Activated CD4-positive, alpha-beta T cell treated with anti-CD3 and anti-CD28 coated beads for 36 hours (primary cell): ENCODE measurements at regions of chr5 and their contacts with region 1.

Region 1: DNA sequence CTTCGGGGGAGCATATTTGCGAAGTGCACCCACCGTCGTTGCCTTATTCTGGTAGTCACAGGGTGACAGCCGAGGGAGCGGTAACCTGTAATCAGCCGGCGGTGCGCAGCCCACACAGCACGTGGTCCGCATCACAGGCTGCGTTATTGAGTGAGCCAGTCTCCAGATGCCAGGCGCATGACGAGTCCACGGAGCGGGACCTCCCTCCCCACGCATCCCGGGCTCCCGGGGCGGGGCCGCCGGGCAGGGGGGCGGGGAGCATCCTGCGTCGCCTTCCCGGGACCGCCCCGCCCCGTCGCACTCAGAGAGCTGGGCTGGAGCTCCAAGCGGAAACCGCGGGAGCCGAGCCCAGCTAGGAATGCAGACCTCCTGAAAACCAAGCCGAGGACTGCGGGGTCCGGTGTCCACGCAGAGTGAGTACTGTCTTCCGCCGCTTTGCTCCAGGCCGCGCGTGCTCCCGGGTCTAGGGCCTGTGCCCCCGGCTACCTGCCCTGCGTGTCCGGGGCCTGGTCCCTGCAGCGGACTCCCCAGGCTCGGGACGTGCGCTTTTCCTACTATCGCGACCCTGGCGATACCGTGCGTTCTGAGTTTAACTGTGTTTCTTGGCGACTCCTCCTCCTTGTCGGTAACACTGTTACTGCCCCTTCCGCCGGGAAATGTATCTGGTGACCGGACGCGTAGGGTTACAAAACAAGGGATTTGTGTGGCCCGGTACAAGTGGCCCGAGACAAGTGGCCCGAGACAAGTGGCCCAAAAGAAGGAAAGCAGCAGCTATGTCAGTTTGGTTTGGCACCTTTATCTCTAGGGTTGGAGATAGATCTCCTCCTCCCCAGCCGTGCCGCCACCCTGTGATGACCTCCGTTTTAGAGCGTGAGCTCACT is 40.6 kb downstream of the CAST start:
- DNase-seq: peak; percentile 92
- ATAC-seq: peak; percentile 78
- H3K4me3 Mint-ChIP-seq: peak overlapping the region; percentile 91
- H3K27ac Mint-ChIP-seq: peak overlapping the region; percentile 81
- H3K4me1 Mint-ChIP-seq: peaks cover 51% of the 10 kb centered on the region
- H3K27me3 Mint-ChIP-seq: no peaks in the 10 kb centered on the region

Region 2: GRCh38 chr5:96344678-96345577 is 357.8 kb before region 1 on chr5:
- CTCF ChIA-PET with region 1: interaction called, 3 read pairs
- POLR2A ChIA-PET with region 1: no interaction called
- intact Hi-C with region 1: loop called in 1 of 2 experiments (anchors 10 kb)
- DNase-seq: peak; percentile 12
- ATAC-seq: peak; percentile 89
- H3K4me3 Mint-ChIP-seq: peak overlapping the region; percentile 15
- H3K27ac Mint-ChIP-seq: no peak overlapping the region
- H3K4me1 Mint-ChIP-seq: peaks cover 28% of the 10 kb centered on the region
- H3K27me3 Mint-ChIP-seq: peaks cover 10% of the 10 kb centered on the region

Region 3: DNA sequence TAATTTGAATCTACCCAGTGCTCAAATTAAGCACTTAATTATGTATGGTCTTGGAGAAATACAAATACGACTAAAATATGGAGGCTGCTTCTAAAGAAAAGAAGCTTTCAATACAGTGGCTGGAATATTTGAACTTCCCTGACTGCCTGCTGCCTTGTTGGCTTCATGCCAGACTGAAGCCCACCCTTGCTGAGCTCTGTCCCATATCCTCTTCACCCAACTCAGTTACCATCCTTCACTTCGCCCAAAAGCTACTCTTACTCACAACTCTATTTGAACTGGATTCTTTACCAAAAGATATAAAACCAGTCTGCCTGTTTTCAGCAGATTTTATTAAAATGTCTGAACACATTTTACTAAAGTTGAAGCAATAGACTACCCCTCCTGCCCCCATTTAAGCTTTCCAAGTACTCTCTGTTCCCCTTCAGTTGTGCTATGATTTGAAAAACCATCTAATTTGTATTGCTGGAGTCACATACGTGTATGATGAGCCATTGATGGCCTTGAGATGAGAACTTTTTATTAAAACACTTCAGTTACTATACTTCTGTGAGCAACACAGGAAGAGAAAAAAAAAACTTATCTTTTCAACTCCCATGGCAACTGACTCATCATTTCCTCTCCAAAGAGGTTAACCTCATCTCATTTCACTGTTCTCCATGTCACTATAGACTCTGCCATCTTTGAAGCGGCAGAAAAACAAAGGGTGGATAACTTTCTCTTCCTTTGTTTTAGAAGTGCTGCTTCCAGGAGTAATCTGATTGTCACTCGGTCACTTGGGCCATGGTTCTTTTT is 165.6 kb before region 1 on chr5:
- CTCF ChIA-PET with region 1: no interaction called
- POLR2A ChIA-PET with region 1: no interaction called
- intact Hi-C with region 1: loop called in 1 of 2 experiments (anchors 2 kb)
- DNase-seq: no peak
- ATAC-seq: peak; percentile 86
- H3K4me3 Mint-ChIP-seq: peak overlapping the region; percentile 1
- H3K27ac Mint-ChIP-seq: peak overlapping the region; percentile 82
- H3K4me1 Mint-ChIP-seq: peaks cover 32% of the 10 kb centered on the region
- H3K27me3 Mint-ChIP-seq: no peaks in the 10 kb centered on the region

Region 4: DNA sequence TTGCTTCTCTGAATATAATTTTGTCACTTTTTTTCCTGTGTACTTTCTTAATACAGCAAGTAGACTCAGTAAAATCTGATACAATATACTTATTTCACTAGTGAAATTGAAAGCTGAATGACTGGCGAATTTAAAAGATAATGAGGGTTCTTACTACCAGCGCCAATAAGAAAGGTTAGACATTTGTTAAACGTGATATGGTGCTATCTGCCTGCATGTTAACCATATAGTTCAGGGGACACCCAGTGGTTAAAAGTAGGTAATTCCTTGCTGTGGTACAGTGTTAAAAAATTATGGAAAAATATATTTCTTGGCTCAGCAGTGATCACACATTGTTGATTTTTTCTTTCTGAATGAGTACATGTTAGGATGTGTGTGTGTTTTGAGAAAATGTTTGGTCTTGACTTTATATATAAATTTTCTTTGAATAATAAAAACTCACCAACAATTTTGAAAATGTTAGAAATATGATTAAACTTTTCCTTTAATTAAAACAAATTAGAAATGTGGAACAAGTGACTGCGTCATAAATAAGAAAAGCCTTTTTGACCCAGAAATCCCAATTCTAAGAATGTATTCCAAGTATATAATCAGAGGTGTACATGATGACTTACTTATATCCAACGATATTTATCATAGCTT is 14.8 kb before region 1 on chr5:
- CTCF ChIA-PET with region 1: interaction called, 19 read pairs
- POLR2A ChIA-PET with region 1: interaction called, 4 read pairs
- intact Hi-C with region 1: no loop called
- DNase-seq: no peak
- ATAC-seq: peak; percentile 93
- H3K4me3 Mint-ChIP-seq: no peak overlapping the region
- H3K27ac Mint-ChIP-seq: no peak overlapping the region
- H3K4me1 Mint-ChIP-seq: peaks cover 23% of the 10 kb centered on the region
- H3K27me3 Mint-ChIP-seq: no peaks in the 10 kb centered on the region

Region 5: DNA sequence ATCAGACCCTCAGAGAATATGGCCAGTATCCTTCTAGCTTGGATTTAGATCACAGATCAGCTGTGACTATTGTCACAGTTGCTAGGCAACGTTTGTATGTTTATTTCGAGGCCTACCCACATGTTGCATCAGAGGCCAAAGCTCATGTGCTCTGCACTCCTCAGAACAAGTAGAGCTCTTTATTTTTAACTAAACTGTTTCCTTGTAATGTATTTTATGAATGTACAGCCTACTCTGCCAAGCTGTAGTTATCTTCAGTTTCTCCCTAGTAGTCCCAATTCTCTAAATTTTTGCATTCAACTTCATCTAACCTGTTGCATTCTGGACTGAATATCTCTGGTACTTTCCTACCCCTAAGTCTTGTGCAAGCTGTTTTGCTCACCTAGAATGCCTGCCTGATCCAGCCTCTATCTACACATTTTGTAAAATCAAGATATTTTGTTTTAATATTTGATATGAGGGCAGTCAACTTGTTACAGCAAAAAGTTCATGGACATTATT is 12.3 kb after region 1 on chr5:
- CTCF ChIA-PET with region 1: interaction called, 4 read pairs
- POLR2A ChIA-PET with region 1: interaction called, 7 read pairs
- intact Hi-C with region 1: loop called in 1 of 2 experiments (anchors 1 kb)
- DNase-seq: peak; percentile 53
- ATAC-seq: peak; percentile 71
- H3K4me3 Mint-ChIP-seq: no peak overlapping the region
- H3K27ac Mint-ChIP-seq: peak overlapping the region; percentile 33
- H3K4me1 Mint-ChIP-seq: peaks cover 38% of the 10 kb centered on the region
- H3K27me3 Mint-ChIP-seq: no peaks in the 10 kb centered on the region

Region 6: DNA sequence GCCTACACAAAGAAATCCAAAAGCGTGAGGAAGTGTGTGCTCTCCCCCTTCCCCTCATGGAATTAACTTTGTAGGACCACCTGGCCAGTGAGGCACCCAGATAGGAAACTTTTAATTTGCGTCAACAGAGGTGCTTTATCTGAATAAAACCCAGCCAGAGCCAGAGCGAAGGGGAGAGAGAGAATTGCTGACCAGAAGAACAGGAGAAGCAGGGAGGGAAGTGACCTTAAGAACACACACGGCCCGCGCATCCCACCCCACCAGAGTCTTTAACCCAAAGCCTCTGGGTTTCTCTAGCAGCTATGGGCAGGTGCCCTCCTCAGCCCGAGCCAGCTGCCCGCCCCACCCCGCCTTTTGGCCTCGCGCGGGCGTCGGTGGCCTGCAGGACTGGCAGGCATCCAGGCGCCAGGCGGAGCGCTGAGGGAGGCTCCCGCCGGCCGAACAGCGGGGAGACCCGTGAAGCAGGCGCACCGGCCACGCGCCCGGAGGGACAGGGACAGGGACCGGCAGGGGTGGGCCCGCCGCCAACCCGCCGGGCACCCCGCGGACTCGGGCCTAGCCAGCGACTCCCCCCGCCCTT is 104.4 kb after region 1 on chr5:
- CTCF ChIA-PET with region 1: no interaction called
- POLR2A ChIA-PET with region 1: interaction called, 4 read pairs
- intact Hi-C with region 1: loop called in 1 of 2 experiments (anchors 1 kb)
- DNase-seq: peak; percentile 65
- ATAC-seq: peak; percentile 5
- H3K4me3 Mint-ChIP-seq: peak overlapping the region; percentile 89
- H3K27ac Mint-ChIP-seq: peak overlapping the region; percentile 94
- H3K4me1 Mint-ChIP-seq: peaks cover 55% of the 10 kb centered on the region
- H3K27me3 Mint-ChIP-seq: no peaks in the 10 kb centered on the region

Region 7: DNA sequence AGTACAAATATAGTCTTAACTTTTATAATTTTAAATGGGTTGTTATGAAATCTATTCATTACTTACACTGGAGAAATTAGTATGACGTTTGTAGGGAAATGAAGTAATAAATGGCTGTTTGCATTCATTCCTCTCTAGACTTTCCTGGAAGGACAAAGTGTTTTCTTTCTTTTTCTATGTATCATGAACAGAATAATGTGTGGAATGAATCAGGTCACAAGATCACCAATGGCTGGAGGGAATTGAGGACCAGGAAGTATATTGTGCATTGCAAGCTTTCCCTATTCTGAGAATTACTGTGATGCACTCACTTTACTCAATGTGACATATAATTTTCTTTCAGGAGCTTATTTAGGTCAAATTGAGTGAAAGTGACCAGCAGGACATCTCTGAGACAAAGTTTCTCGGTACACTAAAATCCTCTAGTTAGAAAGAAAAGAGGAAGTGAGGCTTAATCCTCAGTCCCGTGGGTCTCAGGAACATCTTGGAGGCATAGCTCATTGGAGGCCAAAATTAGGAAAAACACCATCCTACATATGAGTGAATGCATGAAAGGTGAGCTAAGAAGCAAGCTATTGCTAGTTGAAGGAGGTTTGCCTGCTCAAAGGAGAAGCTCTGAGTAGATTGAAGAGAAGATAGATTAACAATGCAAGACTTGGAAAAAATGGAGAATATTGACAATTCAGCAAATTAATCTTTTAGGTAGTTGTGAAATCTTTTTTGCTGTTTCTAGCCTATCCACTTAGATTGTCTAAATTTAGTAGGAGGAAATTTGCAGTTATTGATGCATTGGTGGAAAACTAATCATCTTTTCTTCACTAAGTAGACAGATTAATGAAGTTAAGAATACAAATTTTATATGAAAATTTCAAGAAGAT is 201.6 kb after region 1 on chr5:
- CTCF ChIA-PET with region 1: no interaction called
- POLR2A ChIA-PET with region 1: no interaction called
- intact Hi-C with region 1: no loop called
- DNase-seq: no peak
- ATAC-seq: peak; percentile 61
- H3K4me3 Mint-ChIP-seq: no peak overlapping the region
- H3K27ac Mint-ChIP-seq: no peak overlapping the region
- H3K4me1 Mint-ChIP-seq: peaks cover 9% of the 10 kb centered on the region
- H3K27me3 Mint-ChIP-seq: no peaks in the 10 kb centered on the region